Activated CD8-positive, alpha-beta T cell treated with anti-CD3 and anti-CD28 coated beads, Interleukin-2, amount 10 ng/mL, durations not matched to agents 7 days and 5 days (primary cell): ENCODE measurements at regions of chr22 and their contacts with region 1.

Region 1: GRCh38 chr22:40024201-40025061 is 29.7 kb downstream of the FAM83F start:
- DNase-seq: peak; percentile 74
- ATAC-seq: peak; percentile 84
- H3K4me3 Mint-ChIP-seq: no peak overlapping the region
- H3K27ac Mint-ChIP-seq: no peak overlapping the region
- H3K4me1 Mint-ChIP-seq: peaks cover 6% of the 10 kb centered on the region
- H3K27me3 Mint-ChIP-seq: no peaks in the 10 kb centered on the region

Region 2: GRCh38 chr22:39543095-39543494 is 481.3 kb before region 1 on chr22:
- CTCF ChIA-PET with region 1: interaction called, 113 read pairs
- POLR2A ChIA-PET with region 1: interaction called, 3 read pairs
- DNase-seq: no peak
- ATAC-seq: peak; percentile 49
- H3K4me3 Mint-ChIP-seq: no peak overlapping the region
- H3K27ac Mint-ChIP-seq: no peak overlapping the region
- H3K4me1 Mint-ChIP-seq: peaks cover 20% of the 10 kb centered on the region
- H3K27me3 Mint-ChIP-seq: peaks cover 23% of the 10 kb centered on the region

Region 3: GRCh38 chr22:39900306-39901227 is 123.9 kb before region 1 on chr22 and contains the start of gene GRAP2:
- CTCF ChIA-PET with region 1: interaction called, 20 read pairs
- POLR2A ChIA-PET with region 1: no interaction called
- DNase-seq: peak; percentile 90
- ATAC-seq: peak; percentile 95
- H3K4me3 Mint-ChIP-seq: peak within 1 kb of the TSS; percentile 95
- H3K27ac Mint-ChIP-seq: peak within 1 kb of the TSS; percentile 96
- H3K4me1 Mint-ChIP-seq: peaks cover 17% of the 10 kb centered on the region
- H3K27me3 Mint-ChIP-seq: no peaks in the 10 kb centered on the region
- total RNA-seq, gene GRAP2: 235 to 239 TPM

Region 4: GRCh38 chr22:39932918-39933649 is 91.3 kb before region 1 on chr22:
- CTCF ChIA-PET with region 1: interaction called, 22 read pairs
- POLR2A ChIA-PET with region 1: no interaction called
- DNase-seq: peak; percentile 83
- ATAC-seq: peak; percentile 40
- H3K4me3 Mint-ChIP-seq: peak overlapping the region; percentile 68
- H3K27ac Mint-ChIP-seq: peak overlapping the region; percentile 85
- H3K4me1 Mint-ChIP-seq: peaks cover 56% of the 10 kb centered on the region
- H3K27me3 Mint-ChIP-seq: no peaks in the 10 kb centered on the region

Region 5: GRCh38 chr22:40009292-40009769 is 15.1 kb before region 1 on chr22:
- CTCF ChIA-PET with region 1: interaction called, 24 read pairs
- POLR2A ChIA-PET with region 1: no interaction called
- DNase-seq: no peak
- ATAC-seq: peak; percentile 15
- H3K4me3 Mint-ChIP-seq: peak overlapping the region; percentile 50
- H3K27ac Mint-ChIP-seq: peak overlapping the region; percentile 70
- H3K4me1 Mint-ChIP-seq: peaks cover 21% of the 10 kb centered on the region
- H3K27me3 Mint-ChIP-seq: peaks cover 34% of the 10 kb centered on the region

Region 6: GRCh38 chr22:40044102-40044869 is 19.9 kb after region 1 on chr22:
- CTCF ChIA-PET with region 1: interaction called, 29 read pairs
- POLR2A ChIA-PET with region 1: interaction called, 23 read pairs
- DNase-seq: peak; percentile 99
- ATAC-seq: peak; percentile 90
- H3K4me3 Mint-ChIP-seq: peak overlapping the region; percentile 89
- H3K27ac Mint-ChIP-seq: peak overlapping the region; percentile 99
- H3K4me1 Mint-ChIP-seq: peaks cover 42% of the 10 kb centered on the region
- H3K27me3 Mint-ChIP-seq: peaks cover 8% of the 10 kb centered on the region